HepG2 (cell line): ENCODE measurements at regions of chr4 and their contacts with region 1.

Region 1: GRCh38 chr4:114519368-114519767 is 79.2 kb upstream of the UGT8 start:
- DNase-seq: no peak
- ATAC-seq: no peak
- H3K4me3 ChIP-seq: no peak overlapping the region
- H3K27ac ChIP-seq: no peak overlapping the region
- H3K4me1 ChIP-seq: no peaks in the 10 kb centered on the region
- H3K27me3 ChIP-seq: no peaks in the 10 kb centered on the region
- CTCF ChIP-seq: no peak
- EP300 ChIP-seq: no peak
- POLR2A ChIP-seq: no peak
- RAD21 ChIP-seq: no peak

Region 2: DNA sequence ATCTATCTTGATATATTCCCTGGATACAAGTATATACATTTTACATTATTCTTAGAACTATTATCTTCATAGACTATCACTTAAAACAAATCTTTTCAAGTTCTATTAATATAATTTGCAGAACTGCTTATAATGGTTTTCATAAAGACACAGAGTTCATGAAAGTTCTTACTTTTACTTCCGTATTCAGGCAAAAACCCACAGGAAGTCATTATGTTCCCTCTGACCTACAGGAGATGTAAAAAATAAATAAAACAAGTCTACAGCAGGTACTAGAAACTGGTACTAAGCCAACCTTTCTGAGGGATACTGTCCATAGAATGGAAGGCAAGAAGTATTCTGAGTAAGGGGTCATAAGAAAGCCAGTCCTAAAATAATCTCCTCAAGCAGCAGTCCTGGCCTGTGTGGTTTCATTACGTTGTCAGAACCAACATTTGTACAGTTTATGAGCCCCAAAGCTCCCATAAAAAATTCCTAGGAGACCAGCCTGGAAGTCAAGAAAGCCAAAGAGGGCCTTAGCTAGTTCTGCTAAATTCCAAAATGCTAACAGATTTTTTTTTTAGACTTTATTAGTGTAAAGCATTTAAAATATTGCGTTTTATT is 826.5 kb before region 1 on chr4:
- CTCF ChIA-PET with region 1: no interaction called
- POLR2A ChIA-PET with region 1: no interaction called
- in situ Hi-C with region 1: no loop called
- intact Hi-C with region 1: no loop called
- DNase-seq: no peak
- ATAC-seq: no peak
- H3K4me3 ChIP-seq: no peak overlapping the region
- H3K27ac ChIP-seq: no peak overlapping the region
- H3K4me1 ChIP-seq: peaks cover 13% of the 10 kb centered on the region
- H3K27me3 ChIP-seq: no peaks in the 10 kb centered on the region
- CTCF ChIP-seq: no peak
- EP300 ChIP-seq: no peak
- POLR2A ChIP-seq: no peak
- RAD21 ChIP-seq: no peak

Region 3: DNA sequence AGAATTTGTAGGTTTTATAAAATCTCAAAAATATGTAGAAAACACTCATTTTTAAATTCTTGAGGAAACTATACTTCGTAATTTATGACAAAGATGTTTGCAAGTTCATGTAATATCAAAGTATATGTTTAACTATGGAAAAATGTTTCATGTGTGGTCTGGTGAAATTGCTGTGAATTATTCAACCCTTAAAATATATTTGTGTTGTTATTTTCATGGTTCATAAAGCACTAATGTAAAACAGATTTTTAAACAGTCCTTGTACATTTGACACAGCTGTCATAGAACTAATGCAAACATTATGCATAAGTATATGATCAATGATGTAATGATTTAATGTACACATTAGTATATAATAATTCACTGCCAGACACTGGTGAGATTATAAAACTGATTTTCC is 456.9 kb before region 1 on chr4:
- CTCF ChIA-PET with region 1: no interaction called
- POLR2A ChIA-PET with region 1: no interaction called
- in situ Hi-C with region 1: no loop called
- intact Hi-C with region 1: no loop called
- DNase-seq: no peak
- ATAC-seq: no peak
- H3K4me3 ChIP-seq: no peak overlapping the region
- H3K27ac ChIP-seq: no peak overlapping the region
- H3K4me1 ChIP-seq: peaks cover 5% of the 10 kb centered on the region; the same call in 1 of the 2 replicates
- H3K27me3 ChIP-seq: no peaks in the 10 kb centered on the region
- CTCF ChIP-seq: no peak
- EP300 ChIP-seq: no peak
- POLR2A ChIP-seq: no peak
- RAD21 ChIP-seq: no peak

Region 4: GRCh38 chr4:114563536-114564315 is 44.4 kb after region 1 on chr4:
- CTCF ChIA-PET with region 1: no interaction called
- POLR2A ChIA-PET with region 1: no interaction called
- in situ Hi-C with region 1: no loop called
- intact Hi-C with region 1: loop called (anchors 2 kb)
- DNase-seq: no peak
- ATAC-seq: no peak
- H3K4me3 ChIP-seq: no peak overlapping the region
- H3K27ac ChIP-seq: no peak overlapping the region
- H3K4me1 ChIP-seq: no peaks in the 10 kb centered on the region
- H3K27me3 ChIP-seq: no peaks in the 10 kb centered on the region; a peak in 1 of 5 replicates
- CTCF ChIP-seq: no peak
- EP300 ChIP-seq: no peak
- POLR2A ChIP-seq: no peak
- RAD21 ChIP-seq: no peak

Region 5: GRCh38 chr4:114921790-114922591 is 402.6 kb after region 1 on chr4:
- CTCF ChIA-PET with region 1: no interaction called
- POLR2A ChIA-PET with region 1: no interaction called
- in situ Hi-C with region 1: no loop called
- intact Hi-C with region 1: no loop called
- DNase-seq: peak; percentile 1
- ATAC-seq: peak; percentile 63
- H3K4me3 ChIP-seq: no peak overlapping the region
- H3K27ac ChIP-seq: no peak overlapping the region
- H3K4me1 ChIP-seq: 0 out of 2 replicates have a peak, but pooled peaks cover 9% of the 10 kb centered on the region
- H3K27me3 ChIP-seq: no peaks in the 10 kb centered on the region; a peak in 1 of 5 replicates
- CTCF ChIP-seq: no peak
- EP300 ChIP-seq: no peak
- POLR2A ChIP-seq: no peak
- RAD21 ChIP-seq: no peak